ENCODE measurements at regions of chr7 and their contacts with region 1.

Region 1: DNA sequence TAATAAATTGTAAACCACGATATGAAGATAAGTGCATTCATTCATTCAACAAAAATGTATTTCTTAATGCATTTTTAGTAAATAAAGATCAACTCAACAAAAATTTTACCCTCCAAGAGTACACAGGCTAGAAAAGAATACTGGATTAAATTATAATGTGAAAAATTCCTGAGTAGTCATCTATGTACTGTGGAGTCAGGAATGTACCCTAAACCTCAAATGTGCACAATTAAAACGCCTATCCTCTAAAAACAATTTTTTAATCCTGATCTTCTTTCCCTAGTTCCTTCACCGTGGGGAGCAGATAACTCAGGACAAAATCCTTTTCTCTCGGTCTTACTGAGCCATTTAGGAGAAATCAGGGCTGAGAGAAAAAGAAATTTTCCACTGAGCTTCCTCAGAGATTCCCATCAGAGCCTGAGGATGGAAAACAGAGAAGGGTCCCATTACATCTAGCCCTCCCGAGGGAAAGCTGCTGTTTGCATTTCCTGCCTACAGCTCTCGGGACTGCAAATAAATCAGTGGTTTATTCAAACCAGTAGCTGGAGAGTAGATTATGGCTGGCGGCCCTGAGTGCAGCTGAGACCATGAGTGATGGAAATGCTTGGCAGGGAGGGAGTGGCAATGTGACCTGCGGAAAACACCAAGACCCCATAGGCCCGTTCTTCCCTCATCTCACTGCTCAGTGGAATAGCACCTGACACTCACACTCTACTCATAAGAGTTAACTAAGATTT is 7.4 kb downstream of the TAS2R40 start:
- DNase-seq: no peak
- H3K4me3 ChIP-seq: no peak overlapping the region
- H3K27ac ChIP-seq: no peak overlapping the region
- H3K4me1 ChIP-seq: no peaks in the 10 kb centered on the region
- H3K27me3 ChIP-seq: no peaks in the 10 kb centered on the region
- CTCF ChIP-seq: no peak

Region 2: GRCh38 chr7:142866361-142867058 is 362.7 kb before region 1 on chr7:
- intact Hi-C with region 1: loop called (anchors 10 kb)
- DNase-seq: no peak
- H3K4me3 ChIP-seq: no peak overlapping the region
- H3K27ac ChIP-seq: no peak overlapping the region
- H3K4me1 ChIP-seq: no peaks in the 10 kb centered on the region
- H3K27me3 ChIP-seq: no peaks in the 10 kb centered on the region
- CTCF ChIP-seq: peak; percentile 48 to 53

Region 3: GRCh38 chr7:143391462-143392404 is 162.5 kb after region 1 on chr7:
- intact Hi-C with region 1: no loop called
- DNase-seq: peak; percentile 88 to 97
- H3K4me3 ChIP-seq: peak overlapping the region; percentile 23 to 31
- H3K27ac ChIP-seq: peak overlapping the region; percentile 96 to 100
- H3K4me1 ChIP-seq: peaks cover 5 to 80% (median 66%) of the 10 kb centered on the region in 4 donors
- H3K27me3 ChIP-seq: no peaks in the 10 kb centered on the region
- CTCF ChIP-seq: no peak